PC-3 (cell line): ENCODE measurements at regions of chr4 and their contacts with region 1.

Region 1: GRCh38 chr4:1167247-1167949 is 5.0 kb downstream of the SPON2 start:
- DNase-seq: peak; percentile 79
- ATAC-seq: peak; percentile 88
- H3K4me3 ChIP-seq: peak overlapping the region; percentile 77
- H3K27ac ChIP-seq: no peak overlapping the region
- H3K4me1 ChIP-seq: no peaks in the 10 kb centered on the region
- H3K27me3 ChIP-seq: peaks cover 13% of the 10 kb centered on the region
- CTCF ChIP-seq: peak; percentile 81

Region 2: GRCh38 chr4:1011022-1011694 is 156.2 kb before region 1 on chr4 and contains the start of gene FGFRL1:
- CTCF ChIA-PET with region 1: no interaction called
- POLR2A ChIA-PET with region 1: interaction called, 16 read pairs
- intact Hi-C with region 1: no loop called
- DNase-seq: peak; percentile 77
- ATAC-seq: peak; percentile 53
- H3K4me3 ChIP-seq: peak within 1 kb of the TSS; percentile 73
- H3K27ac ChIP-seq: peak within 1 kb of the TSS; percentile 72
- H3K4me1 ChIP-seq: peaks cover 12% of the 10 kb centered on the region
- H3K27me3 ChIP-seq: 0 out of 2 replicates have a peak, but pooled peaks cover 5% of the 10 kb centered on the region
- CTCF ChIP-seq: no peak
- total RNA-seq, gene FGFRL1: 31.2 and 42.6 TPM in 2 replicates

Region 3: DNA sequence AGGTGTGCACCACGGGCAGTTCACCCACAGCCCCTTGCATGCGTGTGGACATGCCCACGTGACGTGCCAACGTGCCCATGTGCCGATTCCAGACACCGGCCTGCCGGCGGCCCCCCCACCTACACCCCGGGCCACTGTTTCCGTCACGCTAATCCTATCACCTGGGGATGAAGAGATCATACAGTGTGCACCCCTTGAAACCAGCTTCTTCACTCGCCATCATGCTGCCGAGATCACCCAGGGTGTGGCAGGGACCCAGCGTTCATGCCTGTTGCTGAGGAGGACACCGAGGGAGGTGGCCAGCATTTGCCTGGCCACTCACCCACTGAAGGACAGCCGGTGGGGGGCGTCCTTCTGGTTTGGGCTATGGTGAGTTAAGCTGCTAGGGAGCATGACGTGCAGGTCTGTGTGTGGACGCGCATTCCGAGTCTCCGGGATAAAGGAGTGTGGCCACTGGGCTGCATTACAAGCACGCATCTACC is 67.5 kb after region 1 on chr4:
- CTCF ChIA-PET with region 1: no interaction called
- POLR2A ChIA-PET with region 1: interaction called, 12 read pairs
- intact Hi-C with region 1: no loop called
- DNase-seq: no peak
- ATAC-seq: no peak
- H3K4me3 ChIP-seq: no peak overlapping the region
- H3K27ac ChIP-seq: no peak overlapping the region
- H3K4me1 ChIP-seq: no peaks in the 10 kb centered on the region
- H3K27me3 ChIP-seq: no peaks in the 10 kb centered on the region
- CTCF ChIP-seq: no peak